ENCODE measurements at regions of chr16 and their contacts with region 1.

Region 1: GRCh38 chr16:2465653-2466415 is 5.3 kb upstream of the NTN3 start:
- DNase-seq: no peak
- H3K4me3 ChIP-seq: no peak overlapping the region
- H3K27ac ChIP-seq: no peak overlapping the region
- H3K4me1 ChIP-seq: peaks cover 0 to 13% of the 10 kb centered on the region in 2 donors
- H3K27me3 ChIP-seq: no peaks in the 10 kb centered on the region
- CTCF ChIP-seq: no peak
- POLR2A ChIP-seq: no peak

Region 2: GRCh38 chr16:2492292-2492691 is 26.5 kb after region 1 on chr16:
- intact Hi-C with region 1: loop called (anchors 1 kb)
- DNase-seq: no peak
- H3K4me3 ChIP-seq: no peak overlapping the region
- H3K27ac ChIP-seq: no peak overlapping the region
- H3K4me1 ChIP-seq: peaks cover 2 to 7% of the 10 kb centered on the region in 2 donors
- H3K27me3 ChIP-seq: no peaks in the 10 kb centered on the region
- CTCF ChIP-seq: no peak
- POLR2A ChIP-seq: no peak

Measured in breast epithelium (tissue), 4 donors.